Right lobe of liver (tissue), 6 donors: ENCODE measurements at regions of chr21 and their contacts with region 1.

Region 1: GRCh38 chr21:42009831-42010523 is at the start of gene ZBTB21:
- DNase-seq: peak; percentile 99
- ATAC-seq: peak; percentile 88 to 93 (median 90)
- H3K4me3 ChIP-seq: peak within 1 kb of the TSS; percentile 80 to 85 (median 84)
- H3K27ac ChIP-seq: peak within 1 kb of the TSS; percentile 96 to 99 (median 99)
- H3K4me1 ChIP-seq: peaks cover 0 to 14% (median 4%) of the 10 kb centered on the region in 4 donors
- H3K27me3 ChIP-seq: no peaks in the 10 kb centered on the region
- CTCF ChIP-seq: no peak
- POLR2A ChIP-seq: peak; percentile 96
- total RNA-seq, gene ZBTB21: 3.0 to 28.5 (median 11.2) TPM

Region 2: GRCh38 chr21:41966041-41966684 is 43.8 kb before region 1 on chr21:
- intact Hi-C with region 1: no loop called
- DNase-seq: peak in 1 of 3 donors; percentile 25
- ATAC-seq: no peak
- H3K4me3 ChIP-seq: no peak overlapping the region
- H3K27ac ChIP-seq: no peak overlapping the region
- H3K4me1 ChIP-seq: no peaks in the 10 kb centered on the region
- H3K27me3 ChIP-seq: no peaks in the 10 kb centered on the region
- CTCF ChIP-seq: no peak
- POLR2A ChIP-seq: no peak

Region 3: GRCh38 chr21:42107881-42108553 is 98.0 kb after region 1 on chr21:
- intact Hi-C with region 1: loop called (anchors 10 kb)
- DNase-seq: peak; percentile 75 to 80 (median 79)
- ATAC-seq: peak; percentile 88 to 99 (median 98)
- H3K4me3 ChIP-seq: no peak overlapping the region
- H3K27ac ChIP-seq: no peak overlapping the region
- H3K4me1 ChIP-seq: no peaks in the 10 kb centered on the region
- H3K27me3 ChIP-seq: no peaks in the 10 kb centered on the region
- CTCF ChIP-seq: peak; percentile 59 to 85 (median 70)
- POLR2A ChIP-seq: no peak